PC-3 (cell line): ENCODE measurements at regions of chr1 and their contacts with region 1.

Region 1: GRCh38 chr1:169711469-169712281 is at the start of gene SELL:
- DNase-seq: peak; percentile 92
- ATAC-seq: peak; percentile 99
- H3K4me3 ChIP-seq: peak within 1 kb of the TSS; percentile 63
- H3K27ac ChIP-seq: no peak within 1 kb of the TSS
- H3K4me1 ChIP-seq: peaks cover 6% of the 10 kb centered on the region; the same call in 1 of the 2 replicates
- H3K27me3 ChIP-seq: peaks cover 6% of the 10 kb centered on the region; the same call in 1 of the 2 replicates
- CTCF ChIP-seq: peak; percentile 95
- total RNA-seq, gene SELL: 0.69 and 1.2 TPM in 2 replicates

Region 2: DNA sequence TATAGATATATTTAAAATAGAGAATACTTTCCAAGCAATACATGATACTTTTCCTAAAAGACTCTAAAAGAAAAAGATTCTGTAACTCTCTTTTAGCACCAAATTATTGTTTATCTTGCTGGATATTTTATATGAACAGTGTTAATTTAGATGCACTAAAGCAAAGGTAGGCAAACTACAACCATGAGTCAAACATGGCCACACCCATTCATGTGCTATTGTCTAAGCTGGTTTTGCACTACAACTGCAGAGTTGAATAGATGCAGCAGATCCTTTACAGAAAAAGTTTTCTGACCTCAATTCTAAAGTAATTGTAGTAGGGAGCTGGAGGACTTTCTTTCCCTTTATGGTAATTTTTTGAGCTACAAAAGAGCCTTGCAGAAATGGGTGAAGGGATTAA is 324.3 kb before region 1 on chr1:
- CTCF ChIA-PET with region 1: no interaction called
- POLR2A ChIA-PET with region 1: no interaction called
- intact Hi-C with region 1: loop called (anchors 10 kb)
- DNase-seq: peak; percentile 38
- ATAC-seq: peak; percentile 91
- H3K4me3 ChIP-seq: no peak overlapping the region
- H3K27ac ChIP-seq: no peak overlapping the region
- H3K4me1 ChIP-seq: 0 out of 2 replicates have a peak, but pooled peaks cover 8% of the 10 kb centered on the region
- H3K27me3 ChIP-seq: no peaks in the 10 kb centered on the region
- CTCF ChIP-seq: no peak

Region 3: GRCh38 chr1:169466259-169467230 is 245.1 kb before region 1 on chr1:
- CTCF ChIA-PET with region 1: no interaction called
- POLR2A ChIA-PET with region 1: no interaction called
- intact Hi-C with region 1: loop called (anchors 1 kb)
- DNase-seq: peak; percentile 75
- ATAC-seq: peak; percentile 36; the same call in 1 of the 2 replicates
- H3K4me3 ChIP-seq: no peak overlapping the region
- H3K27ac ChIP-seq: no peak overlapping the region
- H3K4me1 ChIP-seq: peaks cover 16% of the 10 kb centered on the region
- H3K27me3 ChIP-seq: no peaks in the 10 kb centered on the region
- CTCF ChIP-seq: peak; percentile 70

Region 4: GRCh38 chr1:169601093-169601881 is 110.4 kb before region 1 on chr1:
- CTCF ChIA-PET with region 1: interaction called, 9 read pairs
- POLR2A ChIA-PET with region 1: no interaction called
- intact Hi-C with region 1: loop called (anchors 1 kb)
- DNase-seq: peak; percentile 74
- ATAC-seq: peak; percentile 76
- H3K4me3 ChIP-seq: no peak overlapping the region
- H3K27ac ChIP-seq: no peak overlapping the region
- H3K4me1 ChIP-seq: no peaks in the 10 kb centered on the region
- H3K27me3 ChIP-seq: peaks cover 39% of the 10 kb centered on the region
- CTCF ChIP-seq: peak; percentile 78

Region 5: GRCh38 chr1:169762699-169763098 is 51.0 kb after region 1 on chr1:
- CTCF ChIA-PET with region 1: no interaction called
- POLR2A ChIA-PET with region 1: no interaction called
- intact Hi-C with region 1: no loop called
- DNase-seq: no peak
- ATAC-seq: no peak
- H3K4me3 ChIP-seq: no peak overlapping the region
- H3K27ac ChIP-seq: no peak overlapping the region
- H3K4me1 ChIP-seq: no peaks in the 10 kb centered on the region
- H3K27me3 ChIP-seq: no peaks in the 10 kb centered on the region
- CTCF ChIP-seq: no peak

Region 6: DNA sequence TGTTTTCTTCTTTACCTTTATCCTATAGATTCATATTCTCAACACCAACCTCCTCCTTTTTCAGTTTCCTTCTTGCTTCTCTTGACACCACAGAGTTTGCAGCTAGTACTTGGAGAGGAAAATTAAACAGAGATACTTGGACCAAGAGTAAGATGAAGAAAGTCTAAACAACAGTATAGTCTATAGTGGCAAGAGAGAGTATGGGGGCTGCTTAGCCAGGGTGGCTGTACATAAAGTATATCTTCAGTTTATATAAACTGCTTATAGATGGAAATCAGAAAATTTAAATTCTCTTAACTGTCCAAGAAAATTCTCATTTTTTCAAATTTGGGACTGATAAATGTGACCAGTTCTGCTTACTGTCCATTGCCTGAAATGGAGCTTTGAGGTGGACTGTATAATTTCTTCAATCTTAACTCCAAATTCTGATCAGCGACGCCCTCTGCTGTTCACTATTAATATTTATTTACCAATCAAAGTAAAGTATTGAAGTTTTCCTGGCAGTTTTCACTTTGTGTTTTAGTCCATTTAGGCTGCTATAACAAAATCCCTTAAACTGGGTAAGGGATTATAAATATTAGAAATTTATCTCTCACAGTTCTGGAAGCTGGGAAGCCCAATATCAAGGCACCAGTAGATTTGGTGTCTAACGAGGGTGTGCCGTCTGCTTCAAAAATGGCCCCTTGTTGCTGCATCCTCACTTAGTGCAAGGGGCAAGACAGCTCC is 97.9 kb after region 1 on chr1:
- CTCF ChIA-PET with region 1: no interaction called
- POLR2A ChIA-PET with region 1: no interaction called
- intact Hi-C with region 1: loop called (anchors 2 kb)
- DNase-seq: peak; percentile 74
- ATAC-seq: peak; percentile 49
- H3K4me3 ChIP-seq: no peak overlapping the region
- H3K27ac ChIP-seq: no peak overlapping the region
- H3K4me1 ChIP-seq: peaks cover 8% of the 10 kb centered on the region
- H3K27me3 ChIP-seq: no peaks in the 10 kb centered on the region
- CTCF ChIP-seq: peak; percentile 87